ENCODE measurements at regions of chr6 and their contacts with region 1.

Region 1: GRCh38 chr6:96521644-96522464 is at the start of gene UFL1:
- DNase-seq: peak; percentile 96
- ATAC-seq: peak; percentile 94
- H3K4me3 ChIP-seq: peak within 1 kb of the TSS; percentile 86 to 96 (median 93)
- H3K4me3 Mint-ChIP-seq: peak within 1 kb of the TSS; percentile 100
- H3K27ac ChIP-seq: peak within 1 kb of the TSS; percentile 98 to 100
- H3K27ac Mint-ChIP-seq: peak within 1 kb of the TSS; percentile 100
- H3K4me1 ChIP-seq: peaks cover 17 to 19% of the 10 kb centered on the region in 2 donors
- H3K4me1 Mint-ChIP-seq: peaks cover 25% of the 10 kb centered on the region
- H3K27me3 ChIP-seq: no peaks in the 10 kb centered on the region
- H3K27me3 Mint-ChIP-seq: no peaks in the 10 kb centered on the region
- CTCF ChIP-seq: peak; percentile 26
- total RNA-seq, gene UFL1: 24.6 and 25.0 TPM in 2 replicates

Region 2: GRCh38 chr6:95577304-95578105 is 944.3 kb before region 1 on chr6 and contains the start of gene MANEA:
- CTCF ChIA-PET with region 1: no interaction called
- POLR2A ChIA-PET with region 1: interaction called, 3 read pairs
- intact Hi-C with region 1: loop called (anchors 2 kb)
- DNase-seq: peak; percentile 89
- ATAC-seq: peak; percentile 87
- H3K4me3 ChIP-seq: peak within 1 kb of the TSS; percentile 75 to 99 (median 91)
- H3K4me3 Mint-ChIP-seq: peak within 1 kb of the TSS; percentile 99
- H3K27ac ChIP-seq: peak within 1 kb of the TSS; percentile 86 to 91
- H3K27ac Mint-ChIP-seq: peak within 1 kb of the TSS; percentile 99
- H3K4me1 ChIP-seq: peaks cover 12 to 15% of the 10 kb centered on the region in 2 donors
- H3K4me1 Mint-ChIP-seq: peaks cover 39% of the 10 kb centered on the region
- H3K27me3 ChIP-seq: no peaks in the 10 kb centered on the region
- H3K27me3 Mint-ChIP-seq: no peaks in the 10 kb centered on the region
- CTCF ChIP-seq: no peak
- total RNA-seq, gene MANEA: 8.7 and 9.0 TPM in 2 replicates

Region 3: GRCh38 chr6:96089173-96089572 is 432.7 kb before region 1 on chr6:
- CTCF ChIA-PET with region 1: no interaction called
- POLR2A ChIA-PET with region 1: no interaction called
- intact Hi-C with region 1: no loop called
- DNase-seq: no peak
- ATAC-seq: no peak
- H3K4me3 ChIP-seq: no peak overlapping the region
- H3K4me3 Mint-ChIP-seq: no peak overlapping the region
- H3K27ac ChIP-seq: no peak overlapping the region
- H3K27ac Mint-ChIP-seq: no peak overlapping the region
- H3K4me1 ChIP-seq: no peaks in the 10 kb centered on the region
- H3K4me1 Mint-ChIP-seq: no peaks in the 10 kb centered on the region
- H3K27me3 ChIP-seq: no peaks in the 10 kb centered on the region
- H3K27me3 Mint-ChIP-seq: no peaks in the 10 kb centered on the region
- CTCF ChIP-seq: no peak

Region 4: GRCh38 chr6:96537726-96538125 is 15.9 kb after region 1 on chr6:
- CTCF ChIA-PET with region 1: no interaction called
- POLR2A ChIA-PET with region 1: no interaction called
- intact Hi-C with region 1: no loop called
- DNase-seq: no peak
- ATAC-seq: no peak
- H3K4me3 ChIP-seq: no peak overlapping the region
- H3K4me3 Mint-ChIP-seq: no peak overlapping the region
- H3K27ac ChIP-seq: no peak overlapping the region
- H3K27ac Mint-ChIP-seq: no peak overlapping the region
- H3K4me1 ChIP-seq: no peaks in the 10 kb centered on the region
- H3K4me1 Mint-ChIP-seq: peaks cover 2% of the 10 kb centered on the region
- H3K27me3 ChIP-seq: no peaks in the 10 kb centered on the region
- H3K27me3 Mint-ChIP-seq: no peaks in the 10 kb centered on the region
- CTCF ChIP-seq: no peak

Region 5: GRCh38 chr6:97282726-97283617 is 761.1 kb after region 1 on chr6 and contains the start of gene MMS22L:
- CTCF ChIA-PET with region 1: no interaction called
- POLR2A ChIA-PET with region 1: no interaction called
- intact Hi-C with region 1: loop called (anchors 5 kb)
- DNase-seq: peak; percentile 95
- ATAC-seq: peak; percentile 98
- H3K4me3 ChIP-seq: peak within 1 kb of the TSS; percentile 68 to 93 (median 88)
- H3K4me3 Mint-ChIP-seq: peak within 1 kb of the TSS; percentile 97
- H3K27ac ChIP-seq: peak within 1 kb of the TSS; percentile 40 to 44
- H3K27ac Mint-ChIP-seq: peak within 1 kb of the TSS; percentile 91
- H3K4me1 ChIP-seq: peaks cover 9 to 10% of the 10 kb centered on the region in 2 donors
- H3K4me1 Mint-ChIP-seq: peaks cover 21% of the 10 kb centered on the region
- H3K27me3 ChIP-seq: no peaks in the 10 kb centered on the region
- H3K27me3 Mint-ChIP-seq: no peaks in the 10 kb centered on the region
- CTCF ChIP-seq: no peak
- total RNA-seq, gene MMS22L: 20.5 and 23.5 TPM in 2 replicates